Panc1 (cell line): ENCODE measurements at regions of chr10 and their contacts with region 1.

Region 1: GRCh38 chr10:133241501-133242205 is 4.0 kb downstream of the VENTX start:
- DNase-seq: no peak
- ATAC-seq: no peak
- H3K4me3 ChIP-seq: no peak overlapping the region
- H3K27ac ChIP-seq: no peak overlapping the region
- H3K4me1 ChIP-seq: no peaks in the 10 kb centered on the region
- H3K27me3 ChIP-seq: peaks cover 4% of the 10 kb centered on the region; the same call in 1 of the 2 replicates
- CTCF ChIP-seq: no peak

Region 2: GRCh38 chr10:133144771-133145170 is 96.9 kb before region 1 on chr10:
- CTCF ChIA-PET with region 1: no interaction called
- POLR2A ChIA-PET with region 1: no interaction called
- in situ Hi-C with region 1: no loop called
- intact Hi-C with region 1: loop called (anchors 5 kb)
- DNase-seq: no peak
- ATAC-seq: no peak
- H3K4me3 ChIP-seq: no peak overlapping the region
- H3K27ac ChIP-seq: no peak overlapping the region
- H3K4me1 ChIP-seq: no peaks in the 10 kb centered on the region
- H3K27me3 ChIP-seq: no peaks in the 10 kb centered on the region
- CTCF ChIP-seq: no peak

Region 3: DNA sequence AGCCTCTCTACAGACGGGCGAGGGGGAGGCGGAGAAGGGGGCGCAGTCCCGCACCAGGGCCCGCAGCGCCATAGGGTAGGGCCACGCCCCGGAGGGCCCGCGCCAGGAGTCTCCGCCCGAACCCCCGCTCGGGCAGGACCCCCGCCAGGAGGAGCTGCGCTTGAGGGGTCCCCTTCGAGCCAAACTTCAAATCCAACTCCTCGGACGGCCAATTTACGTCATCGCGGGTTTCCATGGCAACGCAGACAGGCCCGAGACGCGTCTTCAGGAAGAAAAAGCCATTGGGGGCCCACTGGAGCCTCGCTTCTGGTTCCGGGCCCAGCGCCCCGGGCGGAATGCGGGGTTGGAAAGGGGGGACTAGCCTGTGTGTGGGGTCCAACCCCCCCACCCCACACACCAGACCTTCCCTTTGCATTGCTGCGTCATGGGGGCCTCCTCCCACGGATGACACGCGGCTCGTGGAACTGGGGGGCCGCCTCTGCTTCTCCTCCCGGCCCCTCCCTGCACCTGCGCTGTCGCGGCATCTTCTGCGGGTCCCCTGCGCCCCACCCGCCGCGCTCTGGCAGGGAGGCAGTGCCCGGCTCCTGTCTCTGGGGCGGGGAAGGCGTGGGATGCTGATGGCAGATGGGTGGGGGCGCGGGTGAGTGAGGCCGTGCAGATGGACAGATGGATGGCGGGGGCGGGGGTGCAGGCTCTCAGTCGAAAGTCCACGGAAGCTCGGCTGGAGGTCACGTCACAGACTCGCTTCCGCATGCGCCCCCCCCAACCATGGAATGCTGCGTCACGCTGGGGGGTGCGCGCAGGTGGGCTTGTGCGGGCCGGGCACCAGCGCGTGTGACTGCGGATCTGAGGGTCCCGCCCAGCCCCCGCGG is 93.8 kb after region 1 on chr10:
- CTCF ChIA-PET with region 1: no interaction called
- POLR2A ChIA-PET with region 1: no interaction called
- in situ Hi-C with region 1: no loop called
- intact Hi-C with region 1: no loop called
- DNase-seq: no peak
- ATAC-seq: peak; percentile 76
- H3K4me3 ChIP-seq: peak overlapping the region; percentile 44 to 65
- H3K27ac ChIP-seq: no peak overlapping the region
- H3K4me1 ChIP-seq: no peaks in the 10 kb centered on the region
- H3K27me3 ChIP-seq: peaks cover 16% of the 10 kb centered on the region
- CTCF ChIP-seq: no peak